Uterus (tissue), 4 donors: ENCODE measurements at regions of chr17 and their contacts with region 1.

Region 1: GRCh38 chr17:56939901-56940343 is 20.9 kb downstream of the COIL start:
- DNase-seq: no peak
- H3K4me3 ChIP-seq: no peak overlapping the region
- H3K27ac ChIP-seq: no peak overlapping the region
- H3K4me1 ChIP-seq: no peaks in the 10 kb centered on the region
- H3K27me3 ChIP-seq: no peaks in the 10 kb centered on the region
- CTCF ChIP-seq: peak; percentile 47 to 79 (median 76)
- POLR2A ChIP-seq: no peak

Region 2: GRCh38 chr17:56808503-56808902 is 131.4 kb before region 1 on chr17:
- intact Hi-C with region 1: no loop called
- DNase-seq: no peak
- H3K4me3 ChIP-seq: no peak overlapping the region
- H3K27ac ChIP-seq: no peak overlapping the region
- H3K4me1 ChIP-seq: no peaks in the 10 kb centered on the region
- H3K27me3 ChIP-seq: no peaks in the 10 kb centered on the region
- CTCF ChIP-seq: no peak
- POLR2A ChIP-seq: no peak

Region 3: DNA sequence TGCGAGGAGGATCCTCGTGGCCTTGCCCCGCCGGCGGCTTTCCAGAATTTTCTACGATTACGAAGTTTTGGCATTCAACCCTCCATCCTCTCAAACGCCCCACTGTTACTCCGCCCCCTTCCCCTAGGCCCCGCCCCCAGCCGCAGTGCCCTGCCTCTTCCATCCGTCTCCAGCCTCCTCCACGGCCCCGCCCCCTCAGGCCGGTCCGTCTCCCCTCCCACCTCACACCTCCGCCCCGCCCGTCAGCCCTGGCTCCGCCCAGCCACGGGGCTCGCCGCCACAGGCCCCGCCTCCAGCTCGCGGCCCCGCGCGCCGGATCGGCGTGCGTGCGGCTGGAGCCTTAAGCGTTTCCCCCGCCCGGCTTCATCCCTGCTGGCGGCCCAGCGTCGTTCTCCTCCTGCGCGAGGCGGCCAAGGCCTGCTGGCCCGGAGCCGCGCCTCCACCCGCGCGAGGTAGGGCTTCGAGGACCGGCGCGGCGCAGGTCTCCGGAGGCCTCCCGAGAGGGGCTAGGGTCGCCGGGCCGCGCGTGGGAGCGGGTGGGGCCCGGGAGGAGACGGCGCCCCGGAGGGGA is 106.0 kb before region 1 on chr17 and contains the starts of genes C17orf67 and DGKE:
- intact Hi-C with region 1: loop called (anchors 5 kb)
- DNase-seq: peak; percentile 99
- H3K4me3 ChIP-seq: peak within 1 kb of the TSS; percentile 79 to 87
- H3K27ac ChIP-seq: peak within 1 kb of the TSS; percentile 96 to 97
- H3K4me1 ChIP-seq: peaks cover 4 to 8% of the 10 kb centered on the region in 2 donors
- H3K27me3 ChIP-seq: no peaks in the 10 kb centered on the region
- CTCF ChIP-seq: peak in 1 of 4 experiments; percentile 28
- POLR2A ChIP-seq: peak; percentile 55 to 86
- total RNA-seq, gene C17orf67: 1.4 to 27.4 (median 9.4) TPM in 3 of 4 donors, not detected in the other
- total RNA-seq, gene DGKE: 14.4 to 31.2 (median 23.1) TPM